CD4-positive, alpha-beta memory T cell (primary cell): ENCODE measurements at regions of chrX and their contacts with region 1.

Region 1: DNA sequence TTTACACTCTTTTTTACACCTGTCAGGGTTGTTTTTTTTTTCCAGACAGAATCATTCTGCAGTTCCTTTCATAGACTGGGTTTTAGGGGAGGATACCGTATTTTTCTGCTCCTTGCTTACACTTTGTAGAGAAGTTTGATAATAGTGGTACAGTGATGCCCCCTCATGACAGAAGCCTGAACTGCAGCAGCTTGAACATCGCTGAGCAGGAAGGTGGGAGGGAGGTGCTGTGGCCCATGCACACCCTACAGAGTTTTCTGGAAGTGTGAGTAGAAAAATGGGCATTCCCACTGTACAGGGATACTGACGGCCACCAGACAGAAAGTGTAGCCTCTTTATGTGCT is 54.5 kb downstream of the RAB40A start:
- DNase-seq: peak; percentile 71 to 78 (median 73)
- H3K4me3 ChIP-seq: peak overlapping the region in 1 of 2 donors; percentile 72
- H3K4me3 Mint-ChIP-seq: peak overlapping the region; percentile 86 to 96 (median 92)
- H3K27ac ChIP-seq: peak overlapping the region; percentile 37
- H3K27ac Mint-ChIP-seq: peak overlapping the region; percentile 78 to 95 (median 91)
- H3K4me1 ChIP-seq: peaks cover 21% of the 10 kb centered on the region
- H3K4me1 Mint-ChIP-seq: peaks cover 13 to 39% (median 26%) of the 10 kb centered on the region in 4 donors
- H3K27me3 ChIP-seq: no peaks in the 10 kb centered on the region
- H3K27me3 Mint-ChIP-seq: no peaks in the 10 kb centered on the region

Region 2: DNA sequence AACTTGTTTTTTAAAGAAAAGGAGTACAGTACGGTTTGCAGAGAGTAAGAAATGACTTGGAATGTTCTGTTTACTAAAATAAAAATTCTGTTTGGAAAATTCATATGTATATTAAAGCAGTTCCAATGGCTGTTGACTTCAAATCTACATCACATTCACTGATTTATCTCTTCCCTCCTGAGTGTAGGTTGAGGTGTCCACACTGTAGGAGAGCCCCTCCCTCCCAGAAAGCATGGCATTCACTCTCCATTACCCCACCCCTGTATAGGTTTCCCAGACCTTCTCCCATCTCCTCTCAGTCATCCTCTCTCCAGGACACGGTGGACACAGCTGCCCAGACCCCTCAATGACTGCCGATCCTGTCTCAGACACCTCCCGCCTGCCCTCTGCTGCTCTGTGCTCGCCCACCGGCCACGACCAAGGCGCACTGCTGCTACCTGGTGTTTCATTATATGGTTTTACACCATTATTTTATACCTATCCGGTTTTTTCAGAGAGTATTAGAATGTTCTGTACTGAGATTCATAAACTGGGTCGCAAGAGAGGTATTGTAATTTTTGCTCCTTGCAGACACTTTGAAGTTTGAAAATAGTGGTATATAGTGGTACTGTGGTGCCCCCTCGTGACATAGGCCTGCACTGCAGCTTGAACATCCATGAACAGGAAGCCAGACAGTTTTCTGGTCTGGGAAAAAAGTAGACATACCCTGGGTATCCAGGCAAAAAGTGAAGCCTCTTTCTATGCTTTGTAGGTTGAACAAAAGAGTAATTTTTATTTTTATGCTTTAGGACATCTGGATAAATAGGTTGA is 288.6 kb before region 1 on chrX:
- CTCF ChIA-PET with region 1: no interaction called
- POLR2A ChIA-PET with region 1: no interaction called
- intact Hi-C with region 1: loop called (anchors 1 kb)
- DNase-seq: peak; percentile 40 to 60 (median 53)
- H3K4me3 ChIP-seq: no peak overlapping the region
- H3K4me3 Mint-ChIP-seq: peak overlapping the region in 3 of 8 donors; percentile 26 to 68 (median 47)
- H3K27ac ChIP-seq: no peak overlapping the region
- H3K27ac Mint-ChIP-seq: peak overlapping the region in 2 of 7 donors; percentile 6 to 20
- H3K4me1 ChIP-seq: no peaks in the 10 kb centered on the region
- H3K4me1 Mint-ChIP-seq: peaks cover 4% of the 10 kb centered on the region in 4 donors
- H3K27me3 ChIP-seq: no peaks in the 10 kb centered on the region
- H3K27me3 Mint-ChIP-seq: peaks cover 9 to 11% of the 10 kb centered on the region in 2 donors

Region 3: DNA sequence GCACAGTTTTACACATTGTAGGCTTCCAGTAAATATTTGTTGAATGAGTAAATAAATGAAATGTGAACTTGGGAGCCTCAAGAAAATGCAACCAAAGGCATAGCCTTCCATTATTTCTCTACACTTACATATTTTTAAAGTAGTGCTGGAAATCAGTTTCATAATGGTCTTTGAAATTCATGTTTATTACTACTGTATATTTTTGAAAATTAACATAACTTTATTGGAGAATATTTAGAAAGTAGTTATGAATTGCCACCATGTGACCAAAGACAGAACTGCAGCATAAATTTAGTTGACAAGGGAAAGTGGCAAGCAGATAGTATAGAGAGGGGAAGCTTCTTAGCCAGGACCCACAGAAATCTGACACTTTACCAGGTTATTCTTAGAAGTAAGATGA is 216.2 kb before region 1 on chrX:
- CTCF ChIA-PET with region 1: interaction called, 7 read pairs
- POLR2A ChIA-PET with region 1: no interaction called
- intact Hi-C with region 1: loop called (anchors 1 kb)
- DNase-seq: peak in 3 of 5 donors; percentile 10 to 19 (median 11)
- H3K4me3 ChIP-seq: no peak overlapping the region
- H3K4me3 Mint-ChIP-seq: no peak overlapping the region
- H3K27ac ChIP-seq: no peak overlapping the region
- H3K27ac Mint-ChIP-seq: no peak overlapping the region
- H3K4me1 ChIP-seq: peaks cover 4% of the 10 kb centered on the region
- H3K4me1 Mint-ChIP-seq: peaks cover 2 to 16% (median 6%) of the 10 kb centered on the region in 4 donors
- H3K27me3 ChIP-seq: no peaks in the 10 kb centered on the region
- H3K27me3 Mint-ChIP-seq: no peaks in the 10 kb centered on the region

Region 4: DNA sequence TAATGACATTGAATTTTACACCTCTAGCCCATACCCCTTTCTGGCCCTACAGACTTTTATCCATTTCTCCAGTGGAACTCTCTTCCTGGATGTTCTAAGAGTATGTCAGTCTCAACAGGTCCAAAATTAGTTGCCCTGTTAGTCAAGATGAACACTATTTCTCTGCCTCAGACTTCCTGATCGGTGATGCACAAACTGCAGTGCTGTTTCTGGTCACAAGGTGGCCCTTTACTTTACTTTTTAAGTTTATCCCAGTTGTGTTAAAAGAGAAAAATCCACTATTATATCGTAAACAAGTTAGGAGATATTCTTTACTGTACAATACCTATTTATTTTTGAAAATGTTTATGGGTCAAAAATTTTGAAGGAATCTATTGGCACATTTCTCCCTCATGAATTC is 121.6 kb before region 1 on chrX:
- CTCF ChIA-PET with region 1: interaction called, 93 read pairs
- POLR2A ChIA-PET with region 1: interaction called, 4 read pairs
- intact Hi-C with region 1: loop called (anchors 1 kb)
- DNase-seq: peak; percentile 32 to 43 (median 36)
- H3K4me3 ChIP-seq: no peak overlapping the region
- H3K4me3 Mint-ChIP-seq: no peak overlapping the region
- H3K27ac ChIP-seq: no peak overlapping the region
- H3K27ac Mint-ChIP-seq: no peak overlapping the region
- H3K4me1 ChIP-seq: peaks cover 5% of the 10 kb centered on the region
- H3K4me1 Mint-ChIP-seq: peaks cover 0 to 3% (median 1%) of the 10 kb centered on the region in 4 donors
- H3K27me3 ChIP-seq: no peaks in the 10 kb centered on the region
- H3K27me3 Mint-ChIP-seq: peaks cover 0 to 1% of the 10 kb centered on the region in 2 donors

Region 5: DNA sequence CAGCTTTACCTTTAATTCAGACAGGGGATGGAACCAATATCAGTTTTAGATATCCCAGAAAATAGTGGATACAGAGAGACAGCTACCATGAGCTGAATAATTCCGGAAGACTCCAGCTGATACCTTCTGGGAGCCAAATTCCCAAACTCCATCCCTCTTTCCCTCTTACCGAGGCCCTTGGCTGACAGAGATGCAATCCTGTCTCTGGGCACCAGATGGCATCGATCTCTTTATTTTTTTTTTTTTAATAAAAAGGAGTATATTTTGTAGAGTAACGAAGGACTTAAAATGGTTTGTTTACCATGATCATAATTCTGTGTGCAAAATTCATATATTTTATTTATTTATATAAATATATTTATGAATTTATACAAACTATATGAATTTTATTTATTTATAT is 23.6 kb after region 1 on chrX:
- CTCF ChIA-PET with region 1: interaction called, 26 read pairs
- POLR2A ChIA-PET with region 1: interaction called, 8 read pairs
- intact Hi-C with region 1: loop called (anchors 2 kb)
- DNase-seq: no peak
- H3K4me3 ChIP-seq: no peak overlapping the region
- H3K4me3 Mint-ChIP-seq: no peak overlapping the region
- H3K27ac ChIP-seq: no peak overlapping the region
- H3K27ac Mint-ChIP-seq: no peak overlapping the region
- H3K4me1 ChIP-seq: peaks cover 4% of the 10 kb centered on the region
- H3K4me1 Mint-ChIP-seq: peaks cover 3 to 7% (median 5%) of the 10 kb centered on the region in 4 donors
- H3K27me3 ChIP-seq: no peaks in the 10 kb centered on the region
- H3K27me3 Mint-ChIP-seq: no peaks in the 10 kb centered on the region